Activated T-helper 1 cell treated with anti-CD3 and anti-CD28 coated beads, Interleukin-12 subunit alpha, Interleukin-12 subunit beta, Interleukin-2, Interleukin-4 antibody, amounts not matched to agents 30 ng/mL and 10 ng/mL and 1 ng/mL, durations not matched to agents 14 hours and 24 hours and 36 hours (primary cell): ENCODE measurements at regions of chr3 and their contacts with region 1.

Region 1: GRCh38 chr3:114332342-114333179 is 38.7 kb downstream of the TIGIT start:
- DNase-seq: no peak
- H3K4me3 Mint-ChIP-seq: peak overlapping the region; percentile 20
- H3K27ac Mint-ChIP-seq: peak overlapping the region; percentile 86
- H3K4me1 Mint-ChIP-seq: peaks cover 51% of the 10 kb centered on the region
- H3K27me3 Mint-ChIP-seq: peaks cover 3% of the 10 kb centered on the region

Region 2: GRCh38 chr3:114260152-114260551 is 72.4 kb before region 1 on chr3:
- intact Hi-C with region 1: no loop called
- DNase-seq: no peak
- H3K4me3 Mint-ChIP-seq: no peak overlapping the region
- H3K27ac Mint-ChIP-seq: no peak overlapping the region
- H3K4me1 Mint-ChIP-seq: no peaks in the 10 kb centered on the region
- H3K27me3 Mint-ChIP-seq: peaks cover 4% of the 10 kb centered on the region

Region 3: GRCh38 chr3:114319453-114319852 is 13.1 kb before region 1 on chr3:
- intact Hi-C with region 1: loop called (anchors 1 kb)
- DNase-seq: no peak
- H3K4me3 Mint-ChIP-seq: no peak overlapping the region
- H3K27ac Mint-ChIP-seq: no peak overlapping the region
- H3K4me1 Mint-ChIP-seq: peaks cover 50% of the 10 kb centered on the region
- H3K27me3 Mint-ChIP-seq: peaks cover 2% of the 10 kb centered on the region

Region 4: DNA sequence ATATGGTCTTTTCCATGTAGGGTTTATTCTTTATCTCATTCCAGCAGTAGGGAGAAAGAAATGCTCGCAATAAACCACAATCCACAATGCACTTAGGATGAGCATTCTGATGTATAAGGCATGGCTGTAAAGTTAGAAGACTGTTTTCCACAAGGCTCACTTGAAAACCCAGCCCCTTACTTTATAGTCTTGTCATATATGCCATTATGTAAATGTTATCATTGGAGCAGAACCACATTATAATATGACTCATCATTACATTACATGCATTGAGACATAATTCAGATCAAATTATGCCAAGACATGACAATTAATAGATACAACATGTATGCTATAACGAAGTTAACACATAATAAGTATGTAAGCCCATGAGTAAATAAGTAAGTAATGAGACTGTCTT is 1764.7 kb after region 1 on chr3:
- intact Hi-C with region 1: no loop called
- DNase-seq: no peak
- H3K4me3 Mint-ChIP-seq: no peak overlapping the region
- H3K27ac Mint-ChIP-seq: no peak overlapping the region
- H3K4me1 Mint-ChIP-seq: no peaks in the 10 kb centered on the region
- H3K27me3 Mint-ChIP-seq: no peaks in the 10 kb centered on the region